Naive thymus-derived CD4-positive, alpha-beta T cell (primary cell): ENCODE measurements at regions of chr19 and their contacts with region 1.

Region 1: DNA sequence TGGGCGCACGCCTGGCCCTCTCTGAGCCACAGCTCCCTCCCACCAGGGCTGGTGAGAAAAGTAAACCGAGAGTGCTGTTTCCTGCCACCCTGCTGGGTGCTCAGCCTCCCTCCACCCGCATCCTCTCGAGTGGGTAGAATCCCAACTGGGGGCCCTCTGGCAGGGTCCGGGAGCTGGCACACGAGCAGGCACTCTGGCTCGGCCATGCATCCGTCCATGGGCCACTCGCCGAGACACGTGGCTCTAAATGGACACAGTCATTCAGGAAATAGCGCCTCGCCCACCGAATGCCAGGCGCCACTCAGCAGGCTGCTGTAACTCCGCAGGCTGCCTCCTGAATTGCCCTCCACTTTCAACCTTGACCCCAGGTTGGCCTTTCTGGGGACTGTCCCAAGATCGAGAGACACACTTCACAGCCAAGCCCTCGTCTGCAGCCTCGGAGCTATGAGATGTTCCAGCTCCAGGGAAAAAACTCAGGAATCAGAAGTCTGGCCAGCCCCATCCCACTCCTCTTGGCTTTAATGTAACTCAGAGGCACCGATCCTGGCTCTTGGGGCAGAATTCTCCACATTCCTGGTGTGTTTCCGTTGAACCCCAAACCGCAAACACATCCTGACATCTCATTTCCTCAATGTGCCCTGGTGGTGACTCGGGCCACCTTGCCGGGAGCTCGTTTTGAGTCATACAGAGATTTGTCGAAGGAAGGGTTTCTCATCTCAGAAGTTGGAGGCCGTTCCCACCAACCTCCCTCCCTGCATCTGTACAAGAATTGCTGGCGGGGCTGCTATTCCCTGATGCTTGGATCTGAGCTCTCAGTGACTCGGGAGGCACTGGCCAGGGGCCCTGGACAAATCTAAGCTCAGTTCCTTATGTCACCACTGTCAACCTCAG is 14.1 kb downstream of the KLF2 start:
- DNase-seq: peak in 5 of 9 donors; percentile 30 to 68 (median 50)
- ATAC-seq: peak; percentile 54
- H3K4me3 ChIP-seq: peak overlapping the region; percentile 44
- H3K4me3 Mint-ChIP-seq: peak overlapping the region; percentile 79 to 95 (median 88)
- H3K27ac ChIP-seq: peak overlapping the region; percentile 60
- H3K27ac Mint-ChIP-seq: peak overlapping the region; percentile 86 to 98 (median 91)
- H3K4me1 ChIP-seq: peaks cover 54 to 57% of the 10 kb centered on the region in 2 donors
- H3K4me1 Mint-ChIP-seq: peaks cover 28 to 78% (median 64%) of the 10 kb centered on the region in 7 donors
- H3K27me3 ChIP-seq: no peaks in the 10 kb centered on the region
- H3K27me3 Mint-ChIP-seq: peaks cover 0 to 22% (median 0%) of the 10 kb centered on the region in 5 donors

Region 2: GRCh38 chr19:16355293-16356043 is 16.8 kb after region 1 on chr19:
- CTCF ChIA-PET with region 1: interaction called, 8 read pairs
- POLR2A ChIA-PET with region 1: interaction called, 4,370 read pairs
- intact Hi-C with region 1: loop called in 1 of 2 experiments (anchors 1 kb)
- DNase-seq: peak in 1 of 9 donors; percentile 28
- ATAC-seq: peak; percentile 78
- H3K4me3 ChIP-seq: no peak overlapping the region
- H3K4me3 Mint-ChIP-seq: peak overlapping the region; percentile 48 to 82 (median 70)
- H3K27ac ChIP-seq: peak overlapping the region; percentile 47
- H3K27ac Mint-ChIP-seq: peak overlapping the region in 8 of 9 donors; percentile 49 to 92 (median 80)
- H3K4me1 ChIP-seq: peaks cover 25 to 74% of the 10 kb centered on the region in 2 donors
- H3K4me1 Mint-ChIP-seq: peaks cover 64 to 91% (median 77%) of the 10 kb centered on the region in 7 donors
- H3K27me3 ChIP-seq: no peaks in the 10 kb centered on the region
- H3K27me3 Mint-ChIP-seq: peaks cover 0 to 8% (median 0%) of the 10 kb centered on the region in 5 donors

Region 3: DNA sequence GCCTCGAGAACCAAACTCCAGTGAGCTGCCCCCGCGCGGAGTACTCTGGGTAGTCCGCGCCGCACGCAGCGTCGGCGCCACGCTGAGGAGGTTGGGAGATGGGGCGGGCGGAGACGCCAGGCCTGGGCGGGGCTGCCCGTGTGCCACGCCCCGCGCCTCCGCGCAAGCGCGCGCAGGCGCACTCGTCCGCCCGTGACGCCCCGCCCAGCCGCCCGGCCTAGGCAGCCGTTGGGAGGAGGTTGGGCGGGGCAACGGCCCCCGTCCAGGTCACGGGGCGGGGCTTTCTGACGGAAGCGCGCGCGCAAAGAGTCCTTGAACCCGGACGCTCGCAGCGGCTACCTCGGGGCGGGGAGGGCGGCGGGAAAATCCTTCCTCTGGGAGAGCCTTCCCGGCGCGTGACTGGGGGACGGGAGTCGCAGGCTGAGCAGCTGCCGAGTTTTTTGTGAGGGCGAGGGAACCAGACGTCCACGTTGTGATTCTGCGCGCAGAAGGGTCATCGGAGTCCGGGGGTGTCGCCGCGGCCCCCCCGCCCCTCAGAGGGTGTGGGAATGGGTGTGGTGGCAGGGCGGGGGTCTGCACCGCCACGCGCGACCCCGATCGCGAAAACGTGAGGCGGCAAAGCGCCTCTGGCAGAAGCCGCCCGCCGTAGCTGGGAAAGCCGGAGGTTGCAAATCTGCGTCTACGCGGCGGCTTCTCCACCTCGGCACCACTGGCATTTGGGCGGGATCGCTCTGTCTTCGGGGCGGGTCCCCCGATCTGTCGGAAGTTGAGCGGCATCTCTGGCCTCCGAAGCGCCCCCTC is 289.7 kb after region 1 on chr19 and contains the start of gene MED26:
- CTCF ChIA-PET with region 1: no interaction called
- POLR2A ChIA-PET with region 1: no interaction called
- intact Hi-C with region 1: no loop called
- DNase-seq: peak; percentile 91 to 97 (median 94)
- ATAC-seq: peak; percentile 97
- H3K4me3 ChIP-seq: peak within 1 kb of the TSS; percentile 92
- H3K4me3 Mint-ChIP-seq: peak within 1 kb of the TSS; percentile 92 to 98 (median 97)
- H3K27ac ChIP-seq: peak within 1 kb of the TSS; percentile 97
- H3K27ac Mint-ChIP-seq: peak within 1 kb of the TSS; percentile 88 to 99 (median 98)
- H3K4me1 ChIP-seq: peaks cover 15% of the 10 kb centered on the region in 2 donors
- H3K4me1 Mint-ChIP-seq: peaks cover 34 to 49% (median 44%) of the 10 kb centered on the region in 7 donors
- H3K27me3 ChIP-seq: no peaks in the 10 kb centered on the region
- H3K27me3 Mint-ChIP-seq: peaks cover 0 to 1% (median 0%) of the 10 kb centered on the region in 5 donors
- total RNA-seq, gene MED26: 14.2 to 34.3 (median 17.4) TPM